ENCODE measurements at regions of chr3 and their contacts with region 1.

Region 1: GRCh38 chr3:127652231-127652995 is 20.3 kb upstream of the ABTB1 start:
- DNase-seq: peak; percentile 46
- ATAC-seq: peak; percentile 75
- H3K4me3 Mint-ChIP-seq: no peak overlapping the region
- H3K27ac Mint-ChIP-seq: no peak overlapping the region
- H3K4me1 Mint-ChIP-seq: no peaks in the 10 kb centered on the region
- H3K27me3 Mint-ChIP-seq: no peaks in the 10 kb centered on the region
- CTCF ChIP-seq: peak; percentile 84

Region 2: GRCh38 chr3:127970966-127971592 is 318.7 kb after region 1 on chr3:
- CTCF ChIA-PET with region 1: interaction called, 4 read pairs
- POLR2A ChIA-PET with region 1: no interaction called
- intact Hi-C with region 1: loop called (anchors 5 kb)
- DNase-seq: peak; percentile 39
- ATAC-seq: peak; percentile 39
- H3K4me3 Mint-ChIP-seq: no peak overlapping the region
- H3K27ac Mint-ChIP-seq: no peak overlapping the region
- H3K4me1 Mint-ChIP-seq: no peaks in the 10 kb centered on the region
- H3K27me3 Mint-ChIP-seq: peaks cover 9% of the 10 kb centered on the region
- CTCF ChIP-seq: peak; percentile 62

Measured in activated CD8-positive, alpha-beta T cell treated with anti-CD3 and anti-CD28 coated beads for 36 hours (primary cell).